Dorsolateral prefrontal cortex (tissue), 120 donors: ENCODE measurements at regions of chr14 and their contacts with region 1.

Region 1: DNA sequence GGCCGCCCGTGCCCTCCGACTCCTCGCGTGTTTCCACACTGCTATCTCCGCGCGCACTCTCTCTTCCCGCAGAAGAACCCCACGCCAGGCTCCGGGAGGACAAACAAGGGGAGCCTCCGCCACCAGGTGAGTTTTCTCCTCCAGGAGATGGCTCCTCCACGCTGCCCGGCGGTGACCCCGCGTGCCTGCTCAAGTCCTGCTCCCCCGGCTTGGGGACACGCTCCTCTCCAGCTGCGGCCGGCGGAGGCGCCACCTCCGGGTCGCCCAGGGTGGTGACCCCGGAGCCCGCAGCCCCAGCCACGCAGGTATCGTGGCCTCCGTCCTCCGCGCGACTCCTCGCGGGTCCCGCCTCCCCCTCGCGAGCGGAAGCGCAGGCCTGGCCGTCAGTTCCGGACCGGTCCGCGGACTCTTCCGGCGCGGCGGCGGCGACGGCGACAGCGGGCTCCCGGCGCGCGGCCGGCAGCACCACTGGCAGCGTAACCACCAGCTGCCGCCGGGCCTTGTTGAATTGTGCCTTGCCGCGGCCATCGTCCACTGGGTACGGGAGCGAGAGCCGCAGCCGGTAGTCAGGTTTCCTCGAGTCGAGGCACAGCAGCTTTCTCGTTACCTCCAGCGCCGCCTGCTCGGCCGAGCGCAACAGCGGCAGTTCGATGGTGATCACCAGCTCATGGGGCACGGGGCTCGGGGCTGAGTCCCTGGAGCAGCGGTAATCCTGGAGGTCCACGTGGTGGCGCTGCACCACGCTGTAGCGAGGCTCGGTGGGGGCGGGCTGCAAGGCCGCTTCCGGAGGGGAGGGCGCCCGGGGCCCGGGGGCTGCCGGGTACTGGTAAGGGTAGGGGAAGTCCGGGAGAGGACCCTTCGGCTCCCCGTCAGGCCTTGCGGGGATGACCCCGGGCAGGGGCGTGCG is 1.2 kb downstream of the DNAAF2 start:
- DNase-seq: peak; percentile 85 to 95 (median 93)
- H3K4me3 ChIP-seq: peak overlapping the region; percentile 54 to 100 (median 94)
- H3K27ac ChIP-seq: peak overlapping the region; percentile 55 to 99 (median 97)
- H3K27me3 ChIP-seq: no peaks in the 10 kb centered on the region
- CTCF ChIP-seq: peak; percentile 65 to 98 (median 86)

Region 2: GRCh38 chr14:49585803-49586672 is 47.9 kb before region 1 on chr14 and contains the start of gene RPS29:
- intact Hi-C with region 1: loop called in 1 of 2 experiments (anchors 2 kb)
- DNase-seq: peak; percentile 86 to 97 (median 94)
- H3K4me3 ChIP-seq: peak within 1 kb of the TSS; percentile 65 to 100 (median 95)
- H3K27ac ChIP-seq: peak within 1 kb of the TSS; percentile 59 to 97 (median 89)
- H3K27me3 ChIP-seq: no peaks in the 10 kb centered on the region
- CTCF ChIP-seq: peak in 3 of 56 donors; percentile 5 to 33 (median 17)
- total RNA-seq, gene RPS29: 199 to 551 (median 360) TPM

Region 3: DNA sequence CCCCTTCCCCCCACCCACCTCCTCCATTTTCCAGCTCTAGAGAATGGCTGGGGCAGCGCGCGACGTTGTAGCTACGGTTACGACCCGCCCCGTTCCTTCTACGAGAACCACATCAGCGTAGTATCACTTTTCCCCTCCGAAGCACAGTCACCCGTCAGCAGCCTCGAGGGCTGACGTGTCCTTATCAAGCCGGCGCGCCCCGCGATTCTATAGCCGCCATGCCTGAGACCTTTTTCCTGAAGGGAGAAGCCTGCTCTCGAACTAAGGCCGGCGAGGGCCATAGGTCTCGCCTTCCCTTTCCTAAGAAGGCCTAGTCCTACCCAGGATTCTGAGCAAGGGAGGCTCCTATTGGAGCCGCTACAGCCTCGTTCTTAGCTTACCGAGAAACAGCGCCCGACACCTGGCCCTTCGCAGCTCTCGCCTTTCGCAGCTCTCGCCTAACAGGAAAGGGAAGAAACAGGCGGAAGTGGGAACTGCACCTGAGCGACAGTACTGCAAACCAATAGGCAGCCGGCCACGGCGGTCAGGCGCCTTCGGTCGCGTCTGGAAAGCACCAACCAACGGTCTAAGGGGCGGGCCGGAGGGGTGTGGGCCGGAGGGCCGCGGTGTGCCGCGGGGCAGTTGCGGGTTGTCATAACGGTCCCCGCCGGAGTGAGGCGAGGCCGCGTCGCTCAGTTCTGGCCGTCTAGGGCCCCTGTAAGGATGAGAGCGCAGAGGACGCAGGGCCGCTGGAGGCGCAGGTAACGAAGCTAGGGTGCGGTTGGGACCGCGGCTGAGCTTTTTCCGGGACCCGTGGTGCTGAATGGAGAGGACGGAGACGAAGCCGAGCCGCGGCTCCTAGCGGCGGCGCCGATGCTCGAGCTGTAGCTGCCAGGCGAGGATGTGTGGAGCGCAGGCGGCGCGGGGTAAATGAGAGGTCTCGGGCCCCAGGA is 13.4 kb before region 1 on chr14 and contains the starts of genes MGAT2 and RPL36AL:
- intact Hi-C with region 1: loop called (anchors 1 kb)
- DNase-seq: peak; percentile 97 to 99 (median 98)
- H3K4me3 ChIP-seq: peak within 1 kb of the TSS; percentile 64 to 100 (median 92)
- H3K27ac ChIP-seq: peak within 1 kb of the TSS; percentile 66 to 99 (median 93)
- H3K27me3 ChIP-seq: no peaks in the 10 kb centered on the region
- CTCF ChIP-seq: peak in 48 of 56 donors; percentile 7 to 65 (median 42)
- total RNA-seq, gene MGAT2: 6.7 to 13.7 (median 10.6) TPM
- total RNA-seq, gene RPL36AL: 70.0 to 141 (median 96.5) TPM

Region 4: GRCh38 chr14:49692811-49693734 is 59.2 kb after region 1 on chr14 and contains the start of gene KLHDC1:
- intact Hi-C with region 1: loop called (anchors 5 kb)
- DNase-seq: peak; percentile 71 to 93 (median 86)
- H3K4me3 ChIP-seq: peak within 1 kb of the TSS; percentile 49 to 94 (median 78)
- H3K27ac ChIP-seq: peak within 1 kb of the TSS; percentile 74 to 99 (median 93)
- H3K27me3 ChIP-seq: no peaks in the 10 kb centered on the region
- CTCF ChIP-seq: peak in 25 of 56 donors; percentile 9 to 41 (median 26)
- total RNA-seq, gene KLHDC1: 14.3 to 47.1 (median 25.4) TPM

Region 5: DNA sequence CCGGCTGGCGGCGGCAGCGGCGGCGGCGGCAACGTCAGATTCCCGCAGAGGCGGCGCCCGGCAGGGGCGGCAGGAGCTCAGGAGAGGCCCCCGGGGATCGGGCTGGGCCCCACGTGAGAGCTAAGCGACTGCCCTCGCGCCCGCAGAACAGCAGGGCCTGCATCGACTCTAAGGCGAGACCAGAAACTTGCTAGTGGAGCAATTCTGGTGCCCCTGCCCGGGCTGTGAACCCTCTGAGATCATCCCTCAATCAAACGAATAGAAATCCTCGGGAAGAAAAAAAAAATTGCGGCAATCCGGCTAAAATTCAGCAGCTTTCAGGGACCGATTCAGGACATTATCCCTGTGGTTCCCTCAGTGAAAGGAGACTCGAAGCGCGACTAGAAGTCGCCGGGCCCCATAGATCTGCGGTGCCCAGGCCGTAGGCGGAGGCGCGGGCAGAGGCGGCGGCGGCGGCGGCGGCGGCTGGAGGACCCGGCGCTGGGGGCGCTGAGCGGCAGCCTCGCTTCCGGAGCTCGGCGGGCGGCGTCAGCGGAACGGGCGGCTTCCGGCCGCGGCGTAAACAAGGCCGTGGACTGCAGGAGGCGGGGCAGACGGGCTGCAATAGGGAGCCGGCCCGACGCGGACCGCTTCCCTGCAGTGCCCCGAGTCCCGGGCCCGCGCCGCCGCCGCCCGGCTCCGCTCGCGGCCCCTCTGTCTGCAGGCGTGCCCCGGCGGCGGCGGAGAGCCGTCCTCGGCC is 133.8 kb after region 1 on chr14 and contains the start of gene KLHDC2:
- intact Hi-C with region 1: loop called (anchors 1 kb)
- DNase-seq: peak; percentile 66 to 94 (median 85)
- H3K4me3 ChIP-seq: peak within 1 kb of the TSS; percentile 58 to 99 (median 94)
- H3K27ac ChIP-seq: peak within 1 kb of the TSS; percentile 91 to 100 (median 99)
- H3K27me3 ChIP-seq: no peaks in the 10 kb centered on the region
- CTCF ChIP-seq: peak in 49 of 56 donors; percentile 13 to 77 (median 51)
- total RNA-seq, gene KLHDC2: 43.9 to 114 (median 79.6) TPM

Region 6: GRCh38 chr14:49852301-49853157 is 218.6 kb after region 1 on chr14 and contains the start of gene NEMF:
- intact Hi-C with region 1: loop called (anchors 2 to 5 kb)
- DNase-seq: peak; percentile 72 to 91 (median 84)
- H3K4me3 ChIP-seq: peak within 1 kb of the TSS; percentile 71 to 100 (median 91)
- H3K27ac ChIP-seq: peak within 1 kb of the TSS; percentile 70 to 96 (median 91)
- H3K27me3 ChIP-seq: no peaks in the 10 kb centered on the region
- CTCF ChIP-seq: peak; percentile 75 to 98 (median 90)
- total RNA-seq, gene NEMF: 91.8 to 161 (median 124) TPM

Region 7: GRCh38 chr14:50116181-50116956 is 482.5 kb after region 1 on chr14 and contains the start of gene VCPKMT:
- intact Hi-C with region 1: loop called in 1 of 2 experiments (anchors 10 kb)
- DNase-seq: peak; percentile 86 to 94 (median 90)
- H3K4me3 ChIP-seq: peak within 1 kb of the TSS; percentile 61 to 95 (median 80)
- H3K27ac ChIP-seq: peak within 1 kb of the TSS; percentile 76 to 98 (median 93)
- H3K27me3 ChIP-seq: no peaks in the 10 kb centered on the region
- CTCF ChIP-seq: peak in 37 of 56 donors; percentile 6 to 56 (median 37)
- total RNA-seq, gene VCPKMT: 6.6 to 20.4 (median 13.4) TPM

Region 8: GRCh38 chr14:50333006-50333509 is 699.2 kb after region 1 on chr14:
- intact Hi-C with region 1: no loop called
- DNase-seq: no peak
- H3K4me3 ChIP-seq: no peak overlapping the region
- H3K27ac ChIP-seq: peak overlapping the region in 21 of 59 donors; percentile 2 to 94 (median 37)
- H3K27me3 ChIP-seq: no peaks in the 10 kb centered on the region
- CTCF ChIP-seq: no peak